GM23248 (cell line): ENCODE measurements at regions of chr21 and their contacts with region 1.

Region 1: GRCh38 chr21:41283211-41283818 is 33.3 kb upstream of the FAM3B start:
- DNase-seq: peak; percentile 91
- H3K4me3 ChIP-seq: no peak overlapping the region
- H3K27ac ChIP-seq: no peak overlapping the region
- H3K4me1 ChIP-seq: peaks cover 9% of the 10 kb centered on the region; the same call in 1 of the 2 replicates
- H3K27me3 ChIP-seq: 0 out of 2 replicates have a peak, but pooled peaks cover 4% of the 10 kb centered on the region

Region 2: GRCh38 chr21:41671859-41672532 is 388.7 kb after region 1 on chr21:
- in situ Hi-C with region 1: no loop called
- DNase-seq: no peak
- H3K4me3 ChIP-seq: no peak overlapping the region
- H3K27ac ChIP-seq: no peak overlapping the region
- H3K4me1 ChIP-seq: no peaks in the 10 kb centered on the region
- H3K27me3 ChIP-seq: no peaks in the 10 kb centered on the region

Region 3: GRCh38 chr21:41816220-41817165 is 533.2 kb after region 1 on chr21:
- in situ Hi-C with region 1: loop called (anchors 25 kb)
- DNase-seq: peak; percentile 73
- H3K4me3 ChIP-seq: no peak overlapping the region
- H3K27ac ChIP-seq: peak overlapping the region; percentile 49
- H3K4me1 ChIP-seq: peaks cover 5% of the 10 kb centered on the region
- H3K27me3 ChIP-seq: no peaks in the 10 kb centered on the region